Dendritic cell treated with granulocyte-macrophage colony-stimulating factor and Interleukin-4, amounts not matched to agents 40 ng/mL and 50 ng/mL, for 4 days (primary cell): ENCODE measurements at regions of chr9 and their contacts with region 1.

Region 1: GRCh38 chr9:127796225-127796813 is 6.4 kb upstream of the FPGS start:
- H3K4me3 Mint-ChIP-seq: no peak overlapping the region
- H3K27ac Mint-ChIP-seq: peak overlapping the region; percentile 26
- H3K4me1 Mint-ChIP-seq: peaks cover 31% of the 10 kb centered on the region
- H3K27me3 Mint-ChIP-seq: peaks cover 21% of the 10 kb centered on the region

Region 2: DNA sequence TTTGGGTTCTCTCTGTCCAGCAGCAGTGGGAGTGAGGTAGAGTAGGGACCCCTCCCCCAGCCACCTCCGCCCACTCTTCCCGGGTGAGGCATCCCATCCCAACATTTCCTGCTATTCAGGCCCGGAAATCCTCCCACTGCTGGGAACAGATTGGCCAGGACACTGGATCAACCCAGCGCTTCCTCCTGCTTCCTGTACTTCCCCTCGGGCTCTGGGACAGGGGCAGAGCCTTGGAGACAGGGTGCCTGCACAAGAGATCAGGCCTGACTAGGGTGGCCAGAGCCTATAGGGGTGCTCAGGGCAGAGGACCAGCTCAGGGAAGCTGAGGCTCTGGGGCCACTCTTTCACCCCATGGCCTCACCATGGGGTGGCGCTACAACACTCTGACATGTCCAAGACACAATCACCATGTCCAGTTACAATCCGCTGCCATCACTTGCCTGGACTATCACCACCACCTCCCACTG is 32.4 kb before region 1 on chr9:
- intact Hi-C with region 1: loop called (anchors 5 kb)
- H3K4me3 Mint-ChIP-seq: no peak overlapping the region
- H3K27ac Mint-ChIP-seq: peak overlapping the region; percentile 51
- H3K4me1 Mint-ChIP-seq: peaks cover 77% of the 10 kb centered on the region
- H3K27me3 Mint-ChIP-seq: no peaks in the 10 kb centered on the region

Region 3: GRCh38 chr9:127910613-127911205 is 114.4 kb after region 1 on chr9:
- intact Hi-C with region 1: no loop called
- H3K4me3 Mint-ChIP-seq: no peak overlapping the region
- H3K27ac Mint-ChIP-seq: no peak overlapping the region
- H3K4me1 Mint-ChIP-seq: peaks cover 53% of the 10 kb centered on the region
- H3K27me3 Mint-ChIP-seq: no peaks in the 10 kb centered on the region